ENCODE measurements at regions of chr5 and their contacts with region 1.

Region 1: GRCh38 chr5:76595755-76596481 is 27.3 kb downstream of the F2RL2 start:
- DNase-seq: no peak
- ATAC-seq: no peak
- H3K4me3 ChIP-seq: no peak overlapping the region
- H3K4me3 Mint-ChIP-seq: no peak overlapping the region
- H3K27ac ChIP-seq: peak overlapping the region in 1 of 2 experiments; percentile 3
- H3K27ac Mint-ChIP-seq: peak overlapping the region; percentile 1
- H3K4me1 ChIP-seq: no peaks in the 10 kb centered on the region
- H3K4me1 Mint-ChIP-seq: no peaks in the 10 kb centered on the region
- H3K27me3 ChIP-seq: no peaks in the 10 kb centered on the region
- H3K27me3 Mint-ChIP-seq: no peaks in the 10 kb centered on the region
- CTCF ChIP-seq: no peak

Region 2: GRCh38 chr5:76701298-76701697 is 105.4 kb after region 1 on chr5:
- CTCF ChIA-PET with region 1: no interaction called
- POLR2A ChIA-PET with region 1: no interaction called
- intact Hi-C with region 1: loop called in 1 of 2 experiments (anchors 5 kb)
- DNase-seq: no peak
- ATAC-seq: no peak
- H3K4me3 ChIP-seq: no peak overlapping the region
- H3K4me3 Mint-ChIP-seq: no peak overlapping the region
- H3K27ac ChIP-seq: no peak overlapping the region
- H3K27ac Mint-ChIP-seq: no peak overlapping the region
- H3K4me1 ChIP-seq: no peaks in the 10 kb centered on the region
- H3K4me1 Mint-ChIP-seq: no peaks in the 10 kb centered on the region
- H3K27me3 ChIP-seq: no peaks in the 10 kb centered on the region
- H3K27me3 Mint-ChIP-seq: no peaks in the 10 kb centered on the region
- CTCF ChIP-seq: no peak

Measured in CD8-positive, alpha-beta T cell (primary cell).